GM12878 (cell line): ENCODE measurements at regions of chr19 and their contacts with region 1.

Region 1: DNA sequence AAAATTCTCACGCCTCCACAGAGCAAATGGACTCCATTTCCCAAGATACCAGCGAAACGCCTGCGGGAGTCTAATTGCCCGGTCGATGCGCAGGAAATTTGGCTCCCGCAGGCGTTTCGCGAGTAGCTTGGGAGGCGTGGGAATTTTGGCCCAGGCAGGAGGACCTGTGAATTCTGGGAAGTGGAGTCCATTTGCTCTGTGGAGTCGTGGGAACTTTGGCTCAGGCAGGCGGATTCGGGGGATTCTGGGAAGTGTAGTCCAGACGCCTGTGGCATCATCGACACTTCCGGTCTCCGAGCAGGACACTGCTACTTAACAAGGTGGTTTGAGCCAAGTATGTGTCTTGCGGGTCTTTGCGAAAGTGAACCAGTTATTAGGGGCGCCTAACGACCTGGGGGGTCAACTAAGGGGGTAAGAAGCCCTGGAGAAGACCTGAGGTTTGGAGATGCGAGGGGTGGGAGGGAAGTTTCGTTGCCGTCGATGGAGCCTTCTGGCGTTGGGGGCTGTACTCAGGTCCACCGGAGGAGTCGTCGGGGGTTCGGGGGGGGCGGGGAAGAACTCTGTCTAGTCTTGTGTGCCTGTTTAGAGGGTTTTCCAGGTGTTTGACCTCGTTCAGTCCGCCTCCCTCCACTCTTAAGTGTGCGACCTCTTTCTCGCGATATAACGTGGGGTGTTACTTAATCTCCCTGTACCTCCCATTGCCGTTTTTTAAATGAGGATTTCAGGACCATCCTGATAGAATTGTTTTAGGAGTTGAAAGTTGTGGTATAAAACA is at the start of gene ZNF155:
- DNase-seq: peak; percentile 81
- ATAC-seq: peak; percentile 99
- H3K4me3 ChIP-seq: peak within 1 kb of the TSS; percentile 90
- H3K27ac ChIP-seq: peak within 1 kb of the TSS; percentile 71
- H3K4me1 ChIP-seq: no peaks in the 10 kb centered on the region
- H3K27me3 ChIP-seq: no peaks in the 10 kb centered on the region
- CTCF ChIP-seq: no peak
- EP300 ChIP-seq: no peak
- POLR2A ChIP-seq: peak; percentile 62; the same call in 1 of the 2 replicates
- RAD21 ChIP-seq: no peak
- polyA plus RNA-seq, gene ZNF155: 2.4 to 3.4 TPM

Region 2: GRCh38 chr19:43914051-43914450 is 70.0 kb before region 1 on chr19:
- CTCF ChIA-PET with region 1: no interaction called
- POLR2A ChIA-PET with region 1: no interaction called
- RAD21 ChIA-PET with region 1: no interaction called
- SMC1A ChIA-PET with region 1: no interaction called
- in situ Hi-C with region 1: no loop called
- intact Hi-C with region 1: no loop called
- DNase-seq: no peak
- ATAC-seq: no peak
- H3K4me3 ChIP-seq: no peak overlapping the region
- H3K27ac ChIP-seq: no peak overlapping the region
- H3K4me1 ChIP-seq: no peaks in the 10 kb centered on the region
- H3K27me3 ChIP-seq: no peaks in the 10 kb centered on the region
- CTCF ChIP-seq: no peak
- EP300 ChIP-seq: no peak
- POLR2A ChIP-seq: no peak
- RAD21 ChIP-seq: no peak

Region 3: DNA sequence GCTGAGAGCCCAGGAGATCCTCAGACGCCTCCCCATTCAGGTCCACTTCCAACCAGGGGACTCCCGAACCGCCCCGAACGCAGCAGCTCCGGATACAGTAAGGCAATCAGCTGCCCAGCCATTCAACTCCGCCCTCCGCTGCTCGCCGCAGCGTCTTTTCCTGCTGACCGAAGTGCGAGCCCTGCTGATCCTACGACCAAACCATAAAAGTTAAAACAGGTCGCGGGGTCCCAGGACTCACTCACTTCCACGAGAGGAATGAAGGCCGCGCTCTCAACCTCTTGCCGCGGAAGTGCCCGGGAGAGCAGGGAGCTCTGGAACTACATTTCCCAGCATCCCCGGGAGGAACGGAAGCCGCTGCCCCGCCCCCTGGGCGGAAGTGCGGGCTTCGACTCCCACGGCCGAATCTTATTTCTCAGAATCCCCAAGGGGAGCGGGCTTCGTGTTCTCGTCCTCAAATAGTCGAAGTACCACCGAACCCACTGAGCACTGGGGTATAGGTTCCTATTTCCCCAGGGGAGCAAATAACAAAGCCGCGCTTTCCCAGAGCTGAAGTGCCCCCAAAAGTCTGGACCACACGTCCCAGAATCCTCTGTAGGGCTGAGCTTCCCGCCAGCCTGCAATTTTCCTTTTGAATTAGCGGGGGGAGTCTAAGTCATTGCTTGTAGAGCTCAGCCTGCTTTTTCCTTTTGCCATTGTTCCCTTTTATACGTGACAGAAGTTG is 49.0 kb before region 1 on chr19 and contains the start of gene ZNF45:
- CTCF ChIA-PET with region 1: interaction called, 5 read pairs
- POLR2A ChIA-PET with region 1: no interaction called
- RAD21 ChIA-PET with region 1: interaction called, 5 read pairs
- SMC1A ChIA-PET with region 1: interaction called, 6 read pairs
- in situ Hi-C with region 1: no loop called
- intact Hi-C with region 1: loop called (anchors 1 kb)
- DNase-seq: peak; percentile 60
- ATAC-seq: peak; percentile 99
- H3K4me3 ChIP-seq: peak within 1 kb of the TSS; percentile 82
- H3K27ac ChIP-seq: peak within 1 kb of the TSS; percentile 67
- H3K4me1 ChIP-seq: no peaks in the 10 kb centered on the region
- H3K27me3 ChIP-seq: no peaks in the 10 kb centered on the region
- CTCF ChIP-seq: no peak
- EP300 ChIP-seq: no peak
- POLR2A ChIP-seq: peak; percentile 61; the same call in 1 of the 2 replicates
- RAD21 ChIP-seq: no peak
- polyA plus RNA-seq, gene ZNF45: 4.2 to 5.0 TPM

Region 4: DNA sequence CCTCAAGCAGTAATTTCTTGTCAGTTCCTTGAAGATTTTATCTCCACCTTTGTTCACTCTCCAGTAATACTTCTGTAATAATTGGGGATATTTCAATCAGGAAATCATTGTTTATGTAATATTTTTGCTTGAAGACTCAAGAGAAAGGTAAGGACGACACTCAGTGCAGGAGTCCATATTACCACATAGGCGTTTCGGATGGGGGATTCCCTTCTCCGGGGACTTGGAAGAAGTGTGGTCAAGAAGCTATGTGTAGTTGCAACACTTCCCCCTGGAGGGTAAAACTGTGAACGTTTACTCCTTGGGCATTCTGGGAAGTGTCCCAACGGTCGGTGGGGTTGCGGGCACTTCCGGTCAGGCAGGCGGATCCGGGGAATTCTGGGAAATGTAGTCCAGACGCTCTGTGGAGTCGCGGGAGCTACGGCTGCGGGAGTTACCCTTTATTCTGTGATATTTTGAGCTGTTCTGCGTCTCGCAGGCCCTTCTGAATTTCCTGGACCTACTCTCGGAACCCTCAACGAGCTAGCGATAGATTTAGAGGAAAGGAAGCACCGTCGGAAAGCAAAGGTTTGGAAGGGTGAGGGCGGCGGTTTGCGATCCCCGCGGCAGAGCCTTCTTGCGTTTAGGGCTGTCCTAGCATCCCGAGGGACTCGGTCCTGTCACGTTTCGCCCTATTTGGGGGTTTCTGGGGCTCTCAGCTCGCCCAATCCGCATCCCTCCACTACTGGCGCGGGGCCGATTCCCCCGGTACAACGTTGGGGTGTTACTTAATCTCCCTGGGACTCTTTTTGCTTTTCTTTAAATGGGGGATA is 33.1 kb before region 1 on chr19 and contains the start of gene ZNF221:
- CTCF ChIA-PET with region 1: interaction called, 4 read pairs
- POLR2A ChIA-PET with region 1: no interaction called
- RAD21 ChIA-PET with region 1: interaction called, 4 read pairs
- SMC1A ChIA-PET with region 1: interaction called, 3 read pairs
- in situ Hi-C with region 1: no loop called
- intact Hi-C with region 1: loop called (anchors 1 kb)
- DNase-seq: peak; percentile 79
- ATAC-seq: peak; percentile 99
- H3K4me3 ChIP-seq: peak within 1 kb of the TSS; percentile 85
- H3K27ac ChIP-seq: peak within 1 kb of the TSS; percentile 49; the same call in 1 of the 2 replicates
- H3K4me1 ChIP-seq: no peaks in the 10 kb centered on the region
- H3K27me3 ChIP-seq: no peaks in the 10 kb centered on the region
- CTCF ChIP-seq: peak; percentile 21 to 43 (median 28); a peak in 4 of 6 replicates
- EP300 ChIP-seq: no peak
- POLR2A ChIP-seq: peak; percentile 15; the same call in 1 of the 2 replicates
- RAD21 ChIP-seq: no peak; the same call in 1 of the 2 replicates
- polyA plus RNA-seq, gene ZNF221: 0.16 to 0.47 TPM

Region 5: GRCh38 chr19:44002566-44003460 is 18.7 kb after region 1 on chr19 and contains the start of gene ZNF230:
- CTCF ChIA-PET with region 1: interaction called, 5 read pairs
- POLR2A ChIA-PET with region 1: interaction called, 6 read pairs
- RAD21 ChIA-PET with region 1: no interaction called
- SMC1A ChIA-PET with region 1: interaction called, 6 read pairs
- in situ Hi-C with region 1: no loop called
- intact Hi-C with region 1: loop called (anchors 1 kb)
- DNase-seq: peak; percentile 89
- ATAC-seq: peak; percentile 98
- H3K4me3 ChIP-seq: peak within 1 kb of the TSS; percentile 81
- H3K27ac ChIP-seq: peak within 1 kb of the TSS; percentile 92
- H3K4me1 ChIP-seq: peaks cover 7% of the 10 kb centered on the region
- H3K27me3 ChIP-seq: no peaks in the 10 kb centered on the region
- CTCF ChIP-seq: no peak
- EP300 ChIP-seq: peak in 1 of 2 experiments; percentile 23; a peak in 1 of 4 replicates
- POLR2A ChIP-seq: peak; percentile 67
- RAD21 ChIP-seq: no peak
- polyA plus RNA-seq, gene ZNF230: 1.8 to 2.5 TPM

Region 6: DNA sequence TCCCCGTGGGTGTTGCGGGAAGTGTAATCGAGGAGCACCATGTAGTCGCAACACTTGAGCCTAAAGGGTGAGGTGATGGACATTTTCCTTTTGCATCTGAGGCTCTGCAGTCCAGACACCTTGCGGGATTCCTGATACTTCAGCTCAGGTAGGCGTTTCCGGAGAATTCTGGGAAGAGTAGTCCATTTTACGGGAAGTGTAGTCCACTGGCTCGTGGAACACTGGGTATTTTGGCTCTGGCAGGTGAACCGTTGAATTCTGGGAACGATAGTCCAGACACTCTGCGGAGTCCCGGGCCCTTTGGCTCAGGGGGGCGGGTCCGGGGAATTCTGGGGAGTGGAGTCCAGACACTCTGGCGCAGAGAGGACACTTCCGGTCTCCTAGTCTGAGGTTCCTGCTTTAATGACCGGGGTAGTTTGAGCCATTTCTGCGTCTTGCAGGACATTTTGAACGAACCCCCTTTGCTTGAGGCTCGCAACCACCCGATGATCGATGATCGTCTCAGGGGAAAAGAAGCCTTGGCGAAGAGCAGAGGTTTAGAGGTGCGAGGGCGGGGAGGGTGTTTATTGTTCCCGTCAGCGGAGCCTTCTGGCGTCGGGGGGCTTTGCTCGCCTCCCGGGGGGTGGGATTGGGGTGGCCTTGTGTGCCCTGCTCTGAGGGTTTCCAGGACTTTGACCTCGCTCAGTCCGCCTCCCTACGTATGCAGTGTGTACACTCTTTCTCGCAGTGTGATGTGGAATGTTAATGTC is 67.7 kb after region 1 on chr19 and contains the start of gene ZNF223:
- CTCF ChIA-PET with region 1: no interaction called
- POLR2A ChIA-PET with region 1: no interaction called
- RAD21 ChIA-PET with region 1: no interaction called
- SMC1A ChIA-PET with region 1: no interaction called
- in situ Hi-C with region 1: no loop called
- intact Hi-C with region 1: no loop called
- DNase-seq: peak; percentile 69
- ATAC-seq: peak; percentile 98
- H3K4me3 ChIP-seq: peak within 1 kb of the TSS; percentile 55
- H3K27ac ChIP-seq: no peak within 1 kb of the TSS
- H3K4me1 ChIP-seq: no peaks in the 10 kb centered on the region
- H3K27me3 ChIP-seq: no peaks in the 10 kb centered on the region
- CTCF ChIP-seq: no peak
- EP300 ChIP-seq: no peak
- POLR2A ChIP-seq: no peak
- RAD21 ChIP-seq: no peak
- polyA plus RNA-seq, gene ZNF223: 0.16 TPM in 1 of 2 experiments, not detected in the other